Gastrocnemius medialis (tissue), 4 donors: ENCODE measurements at regions of chr4 and their contacts with region 1.

Region 1: DNA sequence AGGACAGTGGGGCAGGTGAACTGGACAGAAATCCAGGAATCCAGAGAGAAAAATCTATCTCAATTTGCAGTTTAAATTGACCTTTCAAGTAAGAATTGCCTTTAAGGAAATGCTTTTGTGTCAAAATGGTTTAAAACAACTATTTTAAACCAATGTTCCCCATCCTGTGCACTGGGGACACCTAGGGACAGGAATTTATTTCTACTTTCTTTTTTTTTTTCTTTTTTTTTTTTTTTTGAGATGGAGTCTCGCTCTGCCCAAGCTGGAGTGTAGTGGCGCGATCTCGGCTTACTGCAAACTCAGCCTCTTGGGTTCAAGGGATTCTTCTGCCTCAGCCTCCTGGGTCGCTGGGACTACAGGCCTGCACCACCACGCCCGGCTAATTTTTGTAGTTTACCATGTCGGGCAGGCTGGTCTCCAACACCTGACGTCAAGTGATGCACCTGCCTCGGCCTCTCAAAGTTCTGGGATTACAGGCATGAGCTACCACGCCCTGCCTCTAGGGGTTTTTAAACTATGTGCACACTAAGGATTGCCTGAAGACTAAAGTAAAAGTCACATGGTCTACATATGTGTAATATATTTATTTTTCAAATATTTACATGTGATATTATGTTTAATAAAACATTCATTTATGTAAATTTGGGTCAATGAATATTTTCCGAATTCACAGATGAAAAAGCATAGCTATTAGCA is 1213.4 kb downstream of the STIM2 start:
- DNase-seq: no peak
- ATAC-seq: no peak
- H3K4me3 ChIP-seq: no peak overlapping the region
- H3K27ac ChIP-seq: no peak overlapping the region
- H3K4me1 ChIP-seq: no peaks in the 10 kb centered on the region
- H3K27me3 ChIP-seq: no peaks in the 10 kb centered on the region
- CTCF ChIP-seq: no peak
- POLR2A ChIP-seq: no peak

Region 2: DNA sequence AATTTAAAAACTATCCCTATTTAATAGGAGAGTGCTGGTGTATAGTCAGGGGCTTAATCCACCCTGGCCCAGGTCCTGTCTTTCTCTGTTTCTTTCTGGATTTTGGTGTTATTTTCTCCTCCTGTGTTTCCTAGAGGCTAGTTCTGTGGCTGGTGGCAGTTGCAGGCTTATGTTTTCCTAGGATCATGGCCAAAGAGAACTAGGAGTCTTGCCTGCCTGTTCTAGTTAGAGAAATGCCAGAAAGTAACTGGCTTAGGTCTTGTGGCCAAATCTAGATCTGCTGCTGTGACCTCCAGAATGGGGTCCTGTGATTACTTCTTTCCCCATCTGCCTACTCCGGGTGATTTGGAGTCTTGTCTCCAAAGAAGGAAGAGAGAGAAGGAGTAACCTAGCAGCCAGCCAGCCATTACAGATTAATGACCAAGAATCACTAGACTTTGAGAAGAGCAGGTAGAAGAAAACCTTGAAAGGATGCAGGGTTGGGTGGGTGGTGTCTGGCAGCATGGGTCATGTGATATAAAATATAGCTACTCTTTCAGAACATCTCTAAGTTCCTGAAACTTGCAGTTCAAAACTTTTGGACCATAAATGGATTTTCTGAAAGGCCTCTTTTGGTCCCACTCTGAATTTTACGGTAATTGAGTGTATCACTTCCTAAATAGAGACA is 1095.5 kb before region 1 on chr4:
- in situ Hi-C with region 1: no loop called
- intact Hi-C with region 1: no loop called
- DNase-seq: no peak
- ATAC-seq: no peak
- H3K4me3 ChIP-seq: no peak overlapping the region
- H3K27ac ChIP-seq: no peak overlapping the region
- H3K4me1 ChIP-seq: no peaks in the 10 kb centered on the region
- H3K27me3 ChIP-seq: no peaks in the 10 kb centered on the region
- CTCF ChIP-seq: no peak
- POLR2A ChIP-seq: no peak

Region 3: DNA sequence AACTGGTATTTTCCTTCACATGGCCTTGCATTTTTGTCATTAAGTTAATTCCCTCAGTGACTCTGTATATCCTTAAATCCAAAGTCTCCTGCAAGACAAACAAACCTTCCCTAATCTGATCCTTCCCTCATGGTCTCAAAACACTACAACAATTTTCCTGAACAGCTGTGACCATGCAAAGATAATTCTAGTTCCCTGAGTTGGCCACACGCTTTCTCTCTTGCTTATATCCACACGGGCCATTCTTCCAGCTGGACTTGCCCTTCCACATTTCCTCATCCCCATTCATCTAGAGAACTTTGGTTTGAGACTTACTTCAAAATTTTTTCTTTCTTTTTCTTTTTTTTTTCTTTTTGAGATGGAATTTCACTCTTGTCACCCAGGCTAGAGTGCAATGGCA is 377.3 kb after region 1 on chr4:
- in situ Hi-C with region 1: no loop called
- intact Hi-C with region 1: loop called (anchors 5 kb)
- DNase-seq: no peak
- ATAC-seq: no peak
- H3K4me3 ChIP-seq: no peak overlapping the region
- H3K27ac ChIP-seq: no peak overlapping the region
- H3K4me1 ChIP-seq: no peaks in the 10 kb centered on the region
- H3K27me3 ChIP-seq: no peaks in the 10 kb centered on the region
- CTCF ChIP-seq: no peak
- POLR2A ChIP-seq: no peak